PC-3 (cell line): ENCODE measurements at regions of chr5 and their contacts with region 1.

Region 1: GRCh38 chr5:71782771-71783770 is 64.0 kb downstream of the CARTPT start:
- DNase-seq: peak; percentile 81
- ATAC-seq: peak; percentile 81
- H3K4me3 ChIP-seq: peak overlapping the region; percentile 63
- H3K27ac ChIP-seq: no peak overlapping the region
- H3K4me1 ChIP-seq: peaks cover 5% of the 10 kb centered on the region; the same call in 1 of the 2 replicates
- H3K27me3 ChIP-seq: no peaks in the 10 kb centered on the region
- CTCF ChIP-seq: peak; percentile 85

Region 2: GRCh38 chr5:71922584-71923106 is 139.6 kb after region 1 on chr5:
- CTCF ChIA-PET with region 1: interaction called, 3 read pairs
- POLR2A ChIA-PET with region 1: no interaction called
- intact Hi-C with region 1: loop called (anchors 1 kb)
- DNase-seq: peak; percentile 79
- ATAC-seq: peak; percentile 88
- H3K4me3 ChIP-seq: no peak overlapping the region
- H3K27ac ChIP-seq: peak overlapping the region; percentile 67
- H3K4me1 ChIP-seq: peaks cover 22% of the 10 kb centered on the region
- H3K27me3 ChIP-seq: no peaks in the 10 kb centered on the region
- CTCF ChIP-seq: peak; percentile 31; the same call in 1 of the 2 replicates

Region 3: GRCh38 chr5:72307968-72308852 is 525.1 kb after region 1 on chr5:
- CTCF ChIA-PET with region 1: interaction called, 13 read pairs
- POLR2A ChIA-PET with region 1: no interaction called
- intact Hi-C with region 1: loop called (anchors 1 kb)
- DNase-seq: peak; percentile 95
- ATAC-seq: peak; percentile 98
- H3K4me3 ChIP-seq: peak overlapping the region; percentile 79
- H3K27ac ChIP-seq: peak overlapping the region; percentile 91
- H3K4me1 ChIP-seq: peaks cover 9% of the 10 kb centered on the region
- H3K27me3 ChIP-seq: no peaks in the 10 kb centered on the region
- CTCF ChIP-seq: peak; percentile 78